CD8-positive, alpha-beta T cell (primary cell): ENCODE measurements at regions of chr1 and their contacts with region 1.

Region 1: DNA sequence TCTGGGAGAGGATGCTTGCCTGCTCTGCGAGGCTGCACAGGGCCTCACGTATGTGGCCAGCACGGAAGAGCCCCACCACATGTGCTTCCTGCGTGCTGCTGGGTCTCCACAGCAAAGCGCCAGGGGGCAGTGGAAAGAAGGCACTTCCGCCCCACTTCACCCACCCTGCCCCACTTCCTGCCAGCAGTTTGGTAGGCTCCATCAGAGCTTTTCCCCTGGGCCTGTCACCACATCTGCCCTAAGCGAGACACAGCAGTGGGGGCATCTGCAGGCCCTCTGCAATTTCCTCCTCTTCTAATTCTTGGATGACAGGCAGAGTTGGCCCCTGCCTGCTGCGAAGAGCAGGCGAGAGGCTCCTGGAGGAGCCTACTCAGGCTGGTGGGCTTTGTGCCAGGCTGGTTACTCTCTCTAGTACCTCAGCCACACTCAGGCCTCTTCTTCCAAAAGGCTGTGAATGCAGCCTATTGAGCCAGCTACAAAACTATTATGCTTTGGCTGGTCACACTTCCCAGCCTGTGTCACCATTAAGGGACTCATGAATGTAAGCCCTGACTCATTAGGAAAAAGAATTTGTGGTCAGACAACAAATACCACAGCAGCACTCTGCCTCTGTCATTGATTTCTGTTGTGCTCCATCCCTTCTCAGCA is 25.0 kb downstream of the CD244 start:
- DNase-seq: peak; percentile 70 to 96 (median 88)
- ATAC-seq: peak; percentile 91
- H3K4me3 ChIP-seq: peak overlapping the region; percentile 17 to 34
- H3K4me3 Mint-ChIP-seq: peak overlapping the region; percentile 84
- H3K27ac ChIP-seq: peak overlapping the region; percentile 54 to 77
- H3K27ac Mint-ChIP-seq: peak overlapping the region; percentile 96
- H3K4me1 ChIP-seq: peaks cover 85% of the 10 kb centered on the region
- H3K4me1 Mint-ChIP-seq: peaks cover 84% of the 10 kb centered on the region
- H3K27me3 ChIP-seq: no peaks in the 10 kb centered on the region
- H3K27me3 Mint-ChIP-seq: no peaks in the 10 kb centered on the region
- CTCF ChIP-seq: peak; percentile 27

Region 2: DNA sequence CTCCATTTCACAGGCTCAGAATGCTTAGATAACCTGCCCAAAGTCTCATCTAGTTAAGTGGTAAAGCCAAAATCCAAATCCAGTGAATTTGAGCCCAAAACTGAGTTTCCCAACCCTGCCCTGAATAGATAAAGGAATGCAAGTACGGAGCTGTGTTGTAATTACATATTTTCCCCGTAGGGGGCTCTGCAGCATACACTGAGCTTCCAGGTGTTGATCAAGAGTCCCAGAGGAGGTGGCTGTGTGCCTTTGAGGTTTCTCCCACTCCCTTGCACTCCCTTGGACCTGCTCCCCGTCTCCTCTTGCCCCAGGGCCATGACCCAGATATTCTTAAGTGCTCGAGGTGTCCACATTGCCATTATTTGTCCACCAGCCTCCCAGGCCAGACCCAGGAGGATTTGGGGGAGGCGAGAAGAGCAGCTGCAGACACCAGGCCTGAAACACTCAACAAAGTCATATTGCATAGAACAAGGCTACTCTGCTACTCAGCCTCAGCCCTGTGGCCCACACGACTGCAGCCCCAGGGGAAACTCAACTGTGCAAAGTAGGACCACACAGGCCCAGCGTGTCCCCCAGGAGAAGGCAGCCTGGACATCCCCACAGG is 60.1 kb before region 1 on chr1:
- CTCF ChIA-PET with region 1: interaction called, 111 read pairs
- POLR2A ChIA-PET with region 1: interaction called, 13 read pairs
- intact Hi-C with region 1: no loop called
- DNase-seq: peak in 7 of 9 experiments; percentile 33 to 79 (median 52)
- ATAC-seq: peak; percentile 84
- H3K4me3 ChIP-seq: no peak overlapping the region
- H3K4me3 Mint-ChIP-seq: no peak overlapping the region
- H3K27ac ChIP-seq: no peak overlapping the region
- H3K27ac Mint-ChIP-seq: no peak overlapping the region
- H3K4me1 ChIP-seq: no peaks in the 10 kb centered on the region
- H3K4me1 Mint-ChIP-seq: peaks cover 20% of the 10 kb centered on the region
- H3K27me3 ChIP-seq: no peaks in the 10 kb centered on the region
- H3K27me3 Mint-ChIP-seq: no peaks in the 10 kb centered on the region
- CTCF ChIP-seq: peak; percentile 77

Region 3: GRCh38 chr1:160855181-160855981 is 17.7 kb after region 1 on chr1:
- CTCF ChIA-PET with region 1: interaction called, 59 read pairs
- POLR2A ChIA-PET with region 1: interaction called, 8 read pairs
- intact Hi-C with region 1: loop called in 1 of 2 experiments (anchors 2 kb)
- DNase-seq: peak in 6 of 9 experiments; percentile 19 to 72 (median 46)
- ATAC-seq: peak; percentile 68
- H3K4me3 ChIP-seq: peak overlapping the region; percentile 19 to 21
- H3K4me3 Mint-ChIP-seq: no peak overlapping the region
- H3K27ac ChIP-seq: peak overlapping the region in 1 of 2 experiments; percentile 66
- H3K27ac Mint-ChIP-seq: no peak overlapping the region
- H3K4me1 ChIP-seq: peaks cover 41% of the 10 kb centered on the region
- H3K4me1 Mint-ChIP-seq: peaks cover 31% of the 10 kb centered on the region
- H3K27me3 ChIP-seq: no peaks in the 10 kb centered on the region
- H3K27me3 Mint-ChIP-seq: no peaks in the 10 kb centered on the region
- CTCF ChIP-seq: no peak

Region 4: GRCh38 chr1:160877221-160877620 is 39.5 kb after region 1 on chr1:
- CTCF ChIA-PET with region 1: interaction called, 224 read pairs
- POLR2A ChIA-PET with region 1: interaction called, 9 read pairs
- intact Hi-C with region 1: loop called (anchors 1 kb)
- DNase-seq: peak in 3 of 9 experiments; percentile 21 to 78 (median 67)
- ATAC-seq: peak; percentile 86
- H3K4me3 ChIP-seq: no peak overlapping the region
- H3K4me3 Mint-ChIP-seq: no peak overlapping the region
- H3K27ac ChIP-seq: no peak overlapping the region
- H3K27ac Mint-ChIP-seq: peak overlapping the region; percentile 0
- H3K4me1 ChIP-seq: peaks cover 11% of the 10 kb centered on the region
- H3K4me1 Mint-ChIP-seq: peaks cover 27% of the 10 kb centered on the region
- H3K27me3 ChIP-seq: no peaks in the 10 kb centered on the region
- H3K27me3 Mint-ChIP-seq: no peaks in the 10 kb centered on the region
- CTCF ChIP-seq: peak; percentile 62

Region 5: GRCh38 chr1:160942926-160943325 is 105.2 kb after region 1 on chr1:
- CTCF ChIA-PET with region 1: interaction called, 10 read pairs
- POLR2A ChIA-PET with region 1: no interaction called
- intact Hi-C with region 1: no loop called
- DNase-seq: no peak
- ATAC-seq: no peak
- H3K4me3 ChIP-seq: no peak overlapping the region
- H3K4me3 Mint-ChIP-seq: no peak overlapping the region
- H3K27ac ChIP-seq: no peak overlapping the region
- H3K27ac Mint-ChIP-seq: no peak overlapping the region
- H3K4me1 ChIP-seq: no peaks in the 10 kb centered on the region
- H3K4me1 Mint-ChIP-seq: no peaks in the 10 kb centered on the region
- H3K27me3 ChIP-seq: no peaks in the 10 kb centered on the region
- H3K27me3 Mint-ChIP-seq: no peaks in the 10 kb centered on the region
- CTCF ChIP-seq: no peak